PC-3 (cell line): ENCODE measurements at regions of chr9 and their contacts with region 1.

Region 1: GRCh38 chr9:6852243-6852963 is 94.6 kb downstream of the KDM4C start:
- DNase-seq: peak; percentile 84
- ATAC-seq: peak; percentile 78
- H3K4me3 ChIP-seq: no peak overlapping the region
- H3K27ac ChIP-seq: peak overlapping the region; percentile 20; the same call in 1 of the 2 replicates
- H3K4me1 ChIP-seq: peaks cover 20% of the 10 kb centered on the region
- H3K27me3 ChIP-seq: no peaks in the 10 kb centered on the region
- CTCF ChIP-seq: no peak

Region 2: GRCh38 chr9:6877671-6878161 is 25.3 kb after region 1 on chr9:
- CTCF ChIA-PET with region 1: no interaction called
- POLR2A ChIA-PET with region 1: no interaction called
- intact Hi-C with region 1: loop called (anchors 1 kb)
- DNase-seq: peak; percentile 67
- ATAC-seq: peak; percentile 96
- H3K4me3 ChIP-seq: no peak overlapping the region
- H3K27ac ChIP-seq: peak overlapping the region; percentile 50
- H3K4me1 ChIP-seq: peaks cover 17% of the 10 kb centered on the region
- H3K27me3 ChIP-seq: no peaks in the 10 kb centered on the region
- CTCF ChIP-seq: no peak